Naive thymus-derived CD4-positive, alpha-beta T cell (primary cell): ENCODE measurements at regions of chr15 and their contacts with region 1.

Region 1: DNA sequence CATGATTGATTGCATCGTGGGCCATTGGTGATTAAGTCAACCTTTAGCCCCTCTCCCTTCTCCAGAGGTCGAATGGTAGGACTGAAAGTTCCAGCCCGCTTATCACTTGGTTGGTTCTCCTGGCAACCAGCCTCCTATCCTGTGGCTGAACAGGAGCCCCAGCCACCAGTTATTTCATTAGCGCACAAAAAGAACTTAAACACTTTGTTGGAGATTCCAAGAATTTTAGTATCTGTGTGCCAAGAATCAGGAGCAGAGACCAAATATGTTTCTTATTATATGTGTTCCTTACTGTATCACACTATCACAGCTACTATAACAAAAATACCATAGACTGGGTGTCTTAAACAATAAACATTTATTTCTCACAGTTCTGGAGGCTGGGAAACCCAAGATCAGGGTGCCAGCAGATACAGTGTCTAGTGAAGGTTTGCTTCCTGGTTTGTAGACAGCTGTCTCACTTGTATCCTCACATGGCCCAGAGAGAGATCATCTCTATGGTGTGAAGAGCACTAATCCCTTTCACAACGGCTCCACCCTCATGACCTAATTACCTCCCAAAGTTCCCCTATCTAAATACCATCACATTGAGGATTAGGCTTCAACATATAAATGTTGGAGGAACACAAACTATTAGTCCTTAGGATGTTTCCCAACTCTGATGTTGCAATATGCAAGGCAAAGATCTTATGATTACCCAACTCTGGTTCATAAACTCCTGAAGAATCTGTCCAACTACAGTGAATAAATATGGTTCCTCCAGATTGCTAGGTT is 30.5 kb upstream of the APH1B start:
- DNase-seq: no peak
- ATAC-seq: peak; percentile 79
- H3K4me3 ChIP-seq: no peak overlapping the region
- H3K4me3 Mint-ChIP-seq: peak overlapping the region in 1 of 10 donors; percentile 44
- H3K27ac ChIP-seq: no peak overlapping the region
- H3K27ac Mint-ChIP-seq: peak overlapping the region in 4 of 9 donors; percentile 39 to 72 (median 58)
- H3K4me1 ChIP-seq: peaks cover 8 to 10% of the 10 kb centered on the region in 2 donors
- H3K4me1 Mint-ChIP-seq: peaks cover 18 to 75% (median 54%) of the 10 kb centered on the region in 7 donors
- H3K27me3 ChIP-seq: no peaks in the 10 kb centered on the region
- H3K27me3 Mint-ChIP-seq: no peaks in the 10 kb centered on the region

Region 2: GRCh38 chr15:63166219-63166618 is 80.7 kb before region 1 on chr15:
- CTCF ChIA-PET with region 1: interaction called, 3 read pairs
- POLR2A ChIA-PET with region 1: no interaction called
- intact Hi-C with region 1: loop called in 1 of 2 experiments (anchors 2 kb)
- DNase-seq: peak in 1 of 9 donors; percentile 13
- ATAC-seq: peak; percentile 61
- H3K4me3 ChIP-seq: no peak overlapping the region
- H3K4me3 Mint-ChIP-seq: no peak overlapping the region
- H3K27ac ChIP-seq: no peak overlapping the region
- H3K27ac Mint-ChIP-seq: peak overlapping the region in 1 of 9 donors; percentile 49
- H3K4me1 ChIP-seq: no peaks in the 10 kb centered on the region
- H3K4me1 Mint-ChIP-seq: peaks cover 0 to 6% (median 5%) of the 10 kb centered on the region in 7 donors
- H3K27me3 ChIP-seq: no peaks in the 10 kb centered on the region
- H3K27me3 Mint-ChIP-seq: peaks cover 0 to 2% (median 0%) of the 10 kb centered on the region in 5 donors

Region 3: GRCh38 chr15:63212050-63213004 is 34.6 kb before region 1 on chr15:
- CTCF ChIA-PET with region 1: no interaction called
- POLR2A ChIA-PET with region 1: interaction called, 3 read pairs
- intact Hi-C with region 1: loop called in 1 of 2 experiments (anchors 5 kb)
- DNase-seq: no peak
- ATAC-seq: peak; percentile 60
- H3K4me3 ChIP-seq: no peak overlapping the region
- H3K4me3 Mint-ChIP-seq: peak overlapping the region in 9 of 10 donors; percentile 22 to 78 (median 58)
- H3K27ac ChIP-seq: no peak overlapping the region
- H3K27ac Mint-ChIP-seq: peak overlapping the region; percentile 0 to 91 (median 77)
- H3K4me1 ChIP-seq: peaks cover 46 to 52% of the 10 kb centered on the region in 2 donors
- H3K4me1 Mint-ChIP-seq: peaks cover 59 to 92% (median 82%) of the 10 kb centered on the region in 7 donors
- H3K27me3 ChIP-seq: no peaks in the 10 kb centered on the region
- H3K27me3 Mint-ChIP-seq: no peaks in the 10 kb centered on the region

Region 4: DNA sequence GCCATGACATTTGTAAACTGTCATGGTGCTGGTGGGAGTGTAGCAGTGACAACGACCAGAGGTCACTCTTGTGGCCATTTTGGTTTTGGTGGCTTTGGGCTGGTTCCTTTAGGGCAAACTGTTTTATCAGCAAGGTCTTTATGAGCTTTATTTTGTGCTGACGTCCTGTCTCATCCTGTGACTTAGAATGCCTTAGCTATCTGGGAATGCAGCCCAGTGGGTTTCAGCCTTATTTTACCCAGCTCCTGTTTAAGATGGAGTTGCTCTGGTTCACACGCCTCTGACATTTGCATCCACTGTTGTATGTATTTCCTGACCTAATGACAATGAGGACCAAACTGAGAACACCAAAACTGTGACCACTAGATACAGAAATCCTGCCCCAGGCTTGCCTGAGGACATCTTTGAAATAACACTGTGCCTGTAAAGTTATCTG is 19.9 kb before region 1 on chr15:
- CTCF ChIA-PET with region 1: interaction called, 3 read pairs
- POLR2A ChIA-PET with region 1: interaction called, 4 read pairs
- intact Hi-C with region 1: loop called in 1 of 2 experiments (anchors 2 kb)
- DNase-seq: no peak
- ATAC-seq: peak; percentile 16
- H3K4me3 ChIP-seq: no peak overlapping the region
- H3K4me3 Mint-ChIP-seq: peak overlapping the region in 4 of 10 donors; percentile 7 to 72 (median 48)
- H3K27ac ChIP-seq: peak overlapping the region; percentile 49
- H3K27ac Mint-ChIP-seq: peak overlapping the region; percentile 3 to 92 (median 78)
- H3K4me1 ChIP-seq: peaks cover 10 to 16% of the 10 kb centered on the region in 2 donors
- H3K4me1 Mint-ChIP-seq: peaks cover 26 to 83% (median 82%) of the 10 kb centered on the region in 7 donors
- H3K27me3 ChIP-seq: no peaks in the 10 kb centered on the region
- H3K27me3 Mint-ChIP-seq: no peaks in the 10 kb centered on the region

Region 5: GRCh38 chr15:63277038-63277892 is 30.4 kb after region 1 on chr15 and contains the start of gene APH1B:
- CTCF ChIA-PET with region 1: interaction called, 3 read pairs
- POLR2A ChIA-PET with region 1: interaction called, 3 read pairs
- intact Hi-C with region 1: loop called in 1 of 2 experiments (anchors 2 kb)
- DNase-seq: peak; percentile 62 to 80 (median 74)
- ATAC-seq: peak; percentile 92
- H3K4me3 ChIP-seq: peak within 1 kb of the TSS; percentile 71
- H3K4me3 Mint-ChIP-seq: peak within 1 kb of the TSS; percentile 78 to 93 (median 89)
- H3K27ac ChIP-seq: peak within 1 kb of the TSS; percentile 96
- H3K27ac Mint-ChIP-seq: peak within 1 kb of the TSS; percentile 75 to 98 (median 86)
- H3K4me1 ChIP-seq: peaks cover 10 to 21% of the 10 kb centered on the region in 2 donors
- H3K4me1 Mint-ChIP-seq: peaks cover 23 to 49% (median 46%) of the 10 kb centered on the region in 7 donors
- H3K27me3 ChIP-seq: no peaks in the 10 kb centered on the region
- H3K27me3 Mint-ChIP-seq: no peaks in the 10 kb centered on the region
- total RNA-seq, gene APH1B: 9.9 to 29.9 (median 17.6) TPM

Region 6: GRCh38 chr15:63296195-63296594 is 49.3 kb after region 1 on chr15:
- CTCF ChIA-PET with region 1: no interaction called
- POLR2A ChIA-PET with region 1: no interaction called
- intact Hi-C with region 1: no loop called
- DNase-seq: no peak
- ATAC-seq: no peak
- H3K4me3 ChIP-seq: no peak overlapping the region
- H3K4me3 Mint-ChIP-seq: no peak overlapping the region
- H3K27ac ChIP-seq: no peak overlapping the region
- H3K27ac Mint-ChIP-seq: no peak overlapping the region
- H3K4me1 ChIP-seq: no peaks in the 10 kb centered on the region
- H3K4me1 Mint-ChIP-seq: peaks cover 0 to 14% (median 13%) of the 10 kb centered on the region in 7 donors
- H3K27me3 ChIP-seq: no peaks in the 10 kb centered on the region
- H3K27me3 Mint-ChIP-seq: no peaks in the 10 kb centered on the region

Region 7: DNA sequence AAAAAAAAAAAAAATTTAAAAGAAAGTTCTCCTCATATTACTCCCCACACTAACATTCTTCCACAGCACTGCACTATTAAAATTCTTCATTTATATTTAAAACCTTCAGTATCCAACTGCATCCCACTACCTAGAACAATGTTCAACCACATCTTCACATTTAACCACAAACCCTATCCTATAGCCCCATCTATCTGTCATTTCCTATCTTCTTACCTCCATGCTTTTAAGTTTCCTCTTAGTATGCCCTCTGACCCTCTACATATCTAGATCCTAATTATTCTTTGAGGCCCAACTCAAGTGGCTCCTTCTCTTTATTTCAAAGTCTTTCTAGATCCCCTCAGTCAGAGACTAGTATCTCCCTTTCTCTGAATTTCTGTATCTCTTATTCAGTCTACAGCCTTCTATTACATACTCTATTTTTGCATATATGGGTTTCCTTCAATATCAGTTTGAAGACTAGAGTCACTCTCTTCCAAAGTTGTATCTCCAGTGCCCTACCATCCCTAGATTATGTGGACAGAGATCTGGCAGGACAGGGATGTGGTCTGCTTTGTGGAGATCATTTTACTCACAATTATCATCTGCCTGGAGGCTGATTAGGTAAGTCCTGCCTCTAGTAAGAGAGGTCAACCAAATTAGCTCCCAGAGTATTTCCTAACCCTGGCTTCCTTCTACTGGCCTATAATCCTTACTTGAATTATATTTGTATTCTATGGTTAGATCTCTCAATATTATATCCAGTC is 845.4 kb after region 1 on chr15:
- CTCF ChIA-PET with region 1: no interaction called
- POLR2A ChIA-PET with region 1: no interaction called
- intact Hi-C with region 1: no loop called
- DNase-seq: peak in 7 of 9 donors; percentile 21 to 48 (median 44)
- ATAC-seq: no peak
- H3K4me3 ChIP-seq: peak overlapping the region; percentile 87
- H3K4me3 Mint-ChIP-seq: peak overlapping the region; percentile 92 to 100 (median 98)
- H3K27ac ChIP-seq: peak overlapping the region; percentile 88
- H3K27ac Mint-ChIP-seq: peak overlapping the region; percentile 98 to 100 (median 99)
- H3K4me1 ChIP-seq: peaks cover 35 to 39% of the 10 kb centered on the region in 2 donors
- H3K4me1 Mint-ChIP-seq: peaks cover 39 to 71% (median 68%) of the 10 kb centered on the region in 7 donors
- H3K27me3 ChIP-seq: no peaks in the 10 kb centered on the region
- H3K27me3 Mint-ChIP-seq: no peaks in the 10 kb centered on the region